Ascending aorta (tissue), 2 donors: ENCODE measurements at regions of chr1 and their contacts with region 1.

Region 1: GRCh38 chr1:43650310-43651085 is 549 bp downstream of the KDM4A start:
- DNase-seq: peak; percentile 87 to 97
- H3K4me3 ChIP-seq: peak overlapping the region; percentile 77 to 83
- H3K27ac ChIP-seq: peak overlapping the region; percentile 88 to 89
- H3K4me1 ChIP-seq: peaks cover 6 to 12% of the 10 kb centered on the region in 2 donors
- H3K27me3 ChIP-seq: no peaks in the 10 kb centered on the region
- CTCF ChIP-seq: no peak

Region 2: GRCh38 chr1:42462828-42463763 is 1187.4 kb before region 1 on chr1 and contains the start of gene CCDC30:
- intact Hi-C with region 1: loop called (anchors 5 kb)
- DNase-seq: peak; percentile 94 to 98
- H3K4me3 ChIP-seq: peak within 1 kb of the TSS; percentile 77
- H3K27ac ChIP-seq: peak within 1 kb of the TSS in 1 of 2 donors; percentile 23
- H3K4me1 ChIP-seq: no peaks in the 10 kb centered on the region
- H3K27me3 ChIP-seq: no peaks in the 10 kb centered on the region
- CTCF ChIP-seq: no peak
- total RNA-seq, gene CCDC30: not detected

Region 3: GRCh38 chr1:43171876-43172526 is 478.5 kb before region 1 on chr1 and contains the starts of genes CFAP57 and EBNA1BP2:
- intact Hi-C with region 1: loop called (anchors 5 kb)
- DNase-seq: peak; percentile 76 to 96
- H3K4me3 ChIP-seq: peak within 1 kb of the TSS; percentile 69 to 92
- H3K27ac ChIP-seq: peak within 1 kb of the TSS; percentile 46 to 51
- H3K4me1 ChIP-seq: peaks cover 6 to 9% of the 10 kb centered on the region in 2 donors
- H3K27me3 ChIP-seq: no peaks in the 10 kb centered on the region
- CTCF ChIP-seq: no peak
- total RNA-seq, gene CFAP57: not detected
- total RNA-seq, gene EBNA1BP2: 22.1 TPM

Region 4: GRCh38 chr1:43454266-43455011 is 196.1 kb before region 1 on chr1:
- intact Hi-C with region 1: loop called (anchors 5 kb)
- DNase-seq: peak in 1 of 2 donors; percentile 88
- H3K4me3 ChIP-seq: peak overlapping the region; percentile 66 to 77
- H3K27ac ChIP-seq: peak overlapping the region; percentile 88 to 94
- H3K4me1 ChIP-seq: peaks cover 0 to 5% of the 10 kb centered on the region in 2 donors
- H3K27me3 ChIP-seq: no peaks in the 10 kb centered on the region
- CTCF ChIP-seq: no peak

Region 5: GRCh38 chr1:43706598-43707495 is 56.3 kb after region 1 on chr1:
- intact Hi-C with region 1: loop called (anchors 2 kb)
- DNase-seq: peak; percentile 69 to 94
- H3K4me3 ChIP-seq: peak overlapping the region; percentile 96 to 97
- H3K27ac ChIP-seq: peak overlapping the region in 1 of 2 donors; percentile 70
- H3K4me1 ChIP-seq: peaks cover 0 to 9% of the 10 kb centered on the region in 2 donors
- H3K27me3 ChIP-seq: no peaks in the 10 kb centered on the region
- CTCF ChIP-seq: no peak